ENCODE measurements at regions of chr7 and their contacts with region 1.

Region 1: GRCh38 chr7:95476904-95477594 is 8.7 kb upstream of the ASB4 start:
- DNase-seq: peak; percentile 60 to 89
- ATAC-seq: peak; percentile 49 to 54; a peak in 4 of 6 replicates
- H3K4me3 ChIP-seq: no peak overlapping the region
- H3K27ac ChIP-seq: peak overlapping the region; percentile 92 to 94
- H3K4me1 ChIP-seq: peaks cover 40% of the 10 kb centered on the region
- CTCF ChIP-seq: peak; percentile 97
- EP300 ChIP-seq: no peak
- POLR2A ChIP-seq: no peak
- RAD21 ChIP-seq: peak; percentile 98

Region 2: DNA sequence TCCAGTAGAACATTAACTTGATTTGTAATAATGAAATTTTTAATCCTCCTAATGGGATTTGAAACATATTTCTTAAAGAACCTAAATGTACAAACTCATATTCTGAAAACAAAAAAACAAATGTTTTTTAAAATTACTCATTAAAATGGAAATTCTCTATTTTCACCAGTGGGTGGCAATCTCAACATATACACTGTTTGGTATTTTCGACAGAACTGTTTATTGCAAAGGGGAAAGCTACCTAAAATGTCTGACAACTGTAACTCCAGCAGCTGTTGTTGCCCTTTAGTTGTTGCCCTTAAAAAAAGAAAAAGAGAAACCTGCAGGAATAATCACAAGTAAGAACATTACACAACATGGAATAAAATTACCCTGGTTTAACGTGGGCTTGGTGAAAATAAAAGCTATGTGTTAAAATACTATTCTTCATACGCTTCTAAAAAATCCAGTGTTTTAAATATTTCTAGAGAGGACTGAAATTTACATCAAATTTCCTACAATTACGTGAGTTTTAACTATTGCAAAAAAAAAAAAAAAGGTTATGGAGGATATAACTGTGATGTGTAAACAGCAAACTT is 1027.8 kb before region 1 on chr7:
- CTCF ChIA-PET with region 1: interaction called, 30 read pairs
- POLR2A ChIA-PET with region 1: interaction called, 4 read pairs
- DNase-seq: peak; percentile 28 to 57
- ATAC-seq: 0 out of 6 replicates have a peak, but pooled peaks of 1 of the 2 experiments have one; percentile 36
- H3K4me3 ChIP-seq: no peak overlapping the region
- H3K27ac ChIP-seq: no peak overlapping the region
- H3K4me1 ChIP-seq: no peaks in the 10 kb centered on the region
- CTCF ChIP-seq: peak; percentile 77
- EP300 ChIP-seq: no peak
- POLR2A ChIP-seq: no peak
- RAD21 ChIP-seq: peak; percentile 85 to 91

Region 3: DNA sequence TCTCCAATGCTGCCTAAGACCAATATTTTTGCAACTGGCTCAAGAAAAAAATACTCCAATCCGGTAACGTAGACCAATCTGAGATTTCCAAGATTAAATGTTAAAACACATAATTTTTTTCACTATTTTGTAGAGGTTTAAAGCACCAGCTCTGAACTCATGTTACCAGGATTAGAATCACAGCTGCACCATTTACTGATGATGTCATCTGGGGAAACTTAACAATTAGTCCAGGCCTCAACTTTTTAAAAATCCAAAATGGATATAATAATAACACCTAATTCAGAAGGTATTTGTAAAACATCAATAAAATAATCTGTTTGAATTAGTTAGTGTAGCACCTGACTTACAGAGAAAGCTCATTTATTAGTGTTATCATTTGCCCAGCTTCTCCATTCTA is 167.1 kb before region 1 on chr7:
- CTCF ChIA-PET with region 1: interaction called, 19 read pairs
- POLR2A ChIA-PET with region 1: no interaction called
- DNase-seq: no peak
- ATAC-seq: no peak
- H3K4me3 ChIP-seq: no peak overlapping the region
- H3K27ac ChIP-seq: peak overlapping the region in 1 of 2 experiments; percentile 64; a peak in 2 of 6 replicates
- H3K4me1 ChIP-seq: peaks cover 13% of the 10 kb centered on the region
- CTCF ChIP-seq: no peak
- EP300 ChIP-seq: no peak
- POLR2A ChIP-seq: no peak
- RAD21 ChIP-seq: no peak

Region 4: GRCh38 chr7:95404316-95404865 is 72.7 kb before region 1 on chr7:
- CTCF ChIA-PET with region 1: interaction called, 176 read pairs
- POLR2A ChIA-PET with region 1: interaction called, 7 read pairs
- DNase-seq: no peak
- ATAC-seq: peak in 1 of 2 experiments; percentile 30; a peak in 2 of 6 replicates
- H3K4me3 ChIP-seq: no peak overlapping the region
- H3K27ac ChIP-seq: peak overlapping the region; percentile 19 to 72; a peak in 4 of 6 replicates
- H3K4me1 ChIP-seq: peaks cover 92% of the 10 kb centered on the region
- CTCF ChIP-seq: no peak
- EP300 ChIP-seq: no peak
- POLR2A ChIP-seq: no peak
- RAD21 ChIP-seq: no peak

Region 5: DNA sequence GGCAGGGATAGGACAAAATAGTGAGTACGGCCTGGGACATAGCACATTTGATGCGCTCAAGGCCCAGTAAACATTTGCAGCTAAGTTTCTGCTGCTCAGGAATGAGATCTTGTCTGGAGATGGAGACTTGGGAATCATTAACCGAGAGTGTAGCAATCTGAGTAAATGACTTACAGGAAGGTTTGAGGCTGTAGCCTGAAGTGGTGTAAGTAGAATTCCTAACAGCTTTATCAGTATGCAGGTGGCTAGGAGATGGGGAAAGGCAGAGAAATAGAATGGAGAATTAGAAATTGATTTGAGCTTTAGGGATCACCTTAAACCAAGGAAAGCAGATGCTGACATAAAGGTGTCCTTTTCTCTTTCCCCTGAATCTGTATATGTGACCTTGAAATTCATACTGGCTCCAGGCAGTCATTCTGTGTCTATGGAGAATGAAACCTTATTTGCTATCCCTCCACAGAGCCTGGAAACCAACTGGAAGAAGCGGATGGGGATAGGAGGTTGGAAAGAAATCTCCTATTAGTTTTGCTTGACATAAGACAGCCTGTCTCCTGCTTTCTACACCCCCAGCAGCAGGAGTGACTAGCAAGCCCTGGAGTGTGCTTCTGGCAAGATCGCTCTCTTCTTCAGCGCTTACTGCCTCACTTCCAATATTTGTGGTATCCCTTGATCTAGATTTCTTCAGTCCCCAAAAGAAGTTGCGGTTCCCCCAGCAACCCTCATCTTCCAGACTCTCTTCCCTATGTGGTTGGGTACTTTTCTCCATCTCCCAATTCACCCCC is 35.8 kb before region 1 on chr7:
- CTCF ChIA-PET with region 1: interaction called, 32 read pairs
- POLR2A ChIA-PET with region 1: interaction called, 20 read pairs
- DNase-seq: peak; percentile 93 to 97
- ATAC-seq: peak; percentile 96
- H3K4me3 ChIP-seq: peak overlapping the region; percentile 2; the same call in 1 of the 3 replicates
- H3K27ac ChIP-seq: peak overlapping the region; percentile 95 to 98
- H3K4me1 ChIP-seq: peaks cover 75% of the 10 kb centered on the region
- CTCF ChIP-seq: no peak
- EP300 ChIP-seq: peak; percentile 88 to 91; a peak in 4 of 5 replicates
- POLR2A ChIP-seq: no peak
- RAD21 ChIP-seq: peak in 1 of 2 experiments; percentile 29; a peak in 4 of 5 replicates

Region 6: DNA sequence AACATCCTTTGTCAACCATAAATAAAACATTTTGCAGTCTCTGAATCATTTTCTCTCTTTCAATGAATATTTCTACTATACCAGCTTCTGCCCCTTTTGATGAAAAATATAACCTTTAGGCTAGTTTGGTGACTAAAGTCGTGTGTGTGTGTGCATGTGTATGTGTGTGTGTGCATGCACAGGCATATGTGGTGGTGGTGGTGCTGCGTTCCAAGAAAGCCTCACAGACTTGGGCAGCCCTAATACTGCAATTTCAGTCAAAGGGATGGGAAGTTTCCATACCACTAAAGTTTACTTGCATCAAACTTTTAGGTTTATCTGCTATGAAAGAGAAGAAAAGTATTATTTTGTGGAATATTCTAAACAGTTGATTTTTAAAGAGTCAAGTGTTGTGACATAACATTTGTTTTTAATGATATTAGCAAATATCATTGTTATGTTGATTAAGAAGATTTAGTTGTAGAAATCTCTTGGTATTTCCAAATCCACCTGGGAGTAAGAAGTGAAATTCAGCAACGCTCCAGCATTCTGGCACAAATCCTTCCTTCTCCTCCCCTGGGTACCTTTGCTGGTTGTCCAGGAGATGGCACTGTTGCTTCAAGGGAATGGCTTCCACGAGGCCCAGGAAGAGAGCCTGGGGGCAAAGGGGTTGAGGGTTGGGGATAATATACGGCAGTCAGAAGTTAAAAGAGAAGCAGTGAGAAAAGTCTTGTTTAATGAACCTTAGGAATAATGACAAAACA is 50.2 kb after region 1 on chr7:
- CTCF ChIA-PET with region 1: interaction called, 12 read pairs
- POLR2A ChIA-PET with region 1: no interaction called
- DNase-seq: peak; percentile 73 to 75
- ATAC-seq: peak; percentile 90 to 95
- H3K4me3 ChIP-seq: no peak overlapping the region
- H3K27ac ChIP-seq: peak overlapping the region; percentile 49 to 72
- H3K4me1 ChIP-seq: peaks cover 21% of the 10 kb centered on the region
- CTCF ChIP-seq: peak; percentile 94
- EP300 ChIP-seq: no peak
- POLR2A ChIP-seq: no peak
- RAD21 ChIP-seq: peak; percentile 97 to 98

Region 7: DNA sequence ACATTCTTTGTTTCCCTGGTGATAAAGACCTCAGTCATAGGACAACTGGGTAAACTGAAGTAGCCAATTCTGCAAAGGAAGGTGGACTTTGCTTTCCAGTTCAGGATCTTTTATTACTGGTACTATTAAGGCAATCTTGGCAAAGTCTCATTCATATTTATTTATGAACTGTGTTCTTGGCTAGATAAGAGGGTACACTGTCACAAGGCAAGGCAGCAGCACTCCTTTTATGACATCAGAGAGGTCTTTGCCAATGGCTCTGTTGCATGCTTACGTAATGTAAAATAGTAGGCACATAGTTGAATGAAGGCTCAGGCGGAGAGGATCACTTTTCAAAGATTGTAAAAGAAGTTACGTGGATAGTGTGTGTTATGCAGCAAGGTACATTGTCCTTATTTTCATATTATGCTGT is 183.0 kb after region 1 on chr7:
- CTCF ChIA-PET with region 1: no interaction called
- POLR2A ChIA-PET with region 1: no interaction called
- DNase-seq: peak in 1 of 2 experiments; percentile 24
- ATAC-seq: no peak
- H3K4me3 ChIP-seq: no peak overlapping the region
- H3K27ac ChIP-seq: no peak overlapping the region; a peak in 1 of 6 replicates
- H3K4me1 ChIP-seq: no peaks in the 10 kb centered on the region
- CTCF ChIP-seq: no peak
- EP300 ChIP-seq: no peak
- POLR2A ChIP-seq: no peak
- RAD21 ChIP-seq: no peak

Measured in A549 (cell line).